ENCODE measurements at regions of chr22 and their contacts with region 1.

Region 1: GRCh38 chr22:36339171-36340065 is 48.3 kb downstream of the MYH9 start:
- DNase-seq: no peak
- H3K4me3 Mint-ChIP-seq: peak overlapping the region; percentile 51
- H3K27ac Mint-ChIP-seq: peak overlapping the region; percentile 91
- H3K4me1 Mint-ChIP-seq: peaks cover 85% of the 10 kb centered on the region
- H3K27me3 Mint-ChIP-seq: no peaks in the 10 kb centered on the region

Region 2: GRCh38 chr22:35930933-35931332 is 408.5 kb before region 1 on chr22:
- intact Hi-C with region 1: no loop called
- DNase-seq: no peak
- H3K4me3 Mint-ChIP-seq: no peak overlapping the region
- H3K27ac Mint-ChIP-seq: no peak overlapping the region
- H3K4me1 Mint-ChIP-seq: no peaks in the 10 kb centered on the region
- H3K27me3 Mint-ChIP-seq: peaks cover 11% of the 10 kb centered on the region

Region 3: GRCh38 chr22:36359181-36359996 is 20.0 kb after region 1 on chr22:
- intact Hi-C with region 1: loop called (anchors 1 kb)
- DNase-seq: no peak
- H3K4me3 Mint-ChIP-seq: peak overlapping the region; percentile 64
- H3K27ac Mint-ChIP-seq: peak overlapping the region; percentile 85
- H3K4me1 Mint-ChIP-seq: peaks cover 78% of the 10 kb centered on the region
- H3K27me3 Mint-ChIP-seq: no peaks in the 10 kb centered on the region

Region 4: DNA sequence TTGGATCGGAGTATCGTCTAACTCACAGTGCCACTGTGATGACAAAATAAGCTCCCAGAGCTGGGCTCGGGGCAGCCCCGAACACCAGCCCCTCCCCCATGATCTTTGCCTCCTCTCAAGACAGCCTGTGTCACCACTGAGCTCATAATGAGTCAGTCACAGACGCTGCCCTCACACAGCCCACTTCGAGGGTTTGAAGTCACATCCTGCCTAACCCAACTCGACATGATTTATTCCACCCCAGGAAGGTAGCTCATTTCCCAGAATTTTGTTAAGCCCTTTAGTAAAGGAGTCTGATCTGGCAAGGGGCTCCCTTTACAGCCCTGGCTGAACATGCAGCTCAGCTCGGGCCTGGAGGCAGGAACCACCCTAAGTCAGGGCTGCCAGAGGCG is 25.6 kb after region 1 on chr22:
- intact Hi-C with region 1: loop called (anchors 1 kb)
- DNase-seq: peak; percentile 80
- H3K4me3 Mint-ChIP-seq: peak overlapping the region; percentile 44
- H3K27ac Mint-ChIP-seq: peak overlapping the region; percentile 93
- H3K4me1 Mint-ChIP-seq: peaks cover 80% of the 10 kb centered on the region
- H3K27me3 Mint-ChIP-seq: no peaks in the 10 kb centered on the region

Region 5: DNA sequence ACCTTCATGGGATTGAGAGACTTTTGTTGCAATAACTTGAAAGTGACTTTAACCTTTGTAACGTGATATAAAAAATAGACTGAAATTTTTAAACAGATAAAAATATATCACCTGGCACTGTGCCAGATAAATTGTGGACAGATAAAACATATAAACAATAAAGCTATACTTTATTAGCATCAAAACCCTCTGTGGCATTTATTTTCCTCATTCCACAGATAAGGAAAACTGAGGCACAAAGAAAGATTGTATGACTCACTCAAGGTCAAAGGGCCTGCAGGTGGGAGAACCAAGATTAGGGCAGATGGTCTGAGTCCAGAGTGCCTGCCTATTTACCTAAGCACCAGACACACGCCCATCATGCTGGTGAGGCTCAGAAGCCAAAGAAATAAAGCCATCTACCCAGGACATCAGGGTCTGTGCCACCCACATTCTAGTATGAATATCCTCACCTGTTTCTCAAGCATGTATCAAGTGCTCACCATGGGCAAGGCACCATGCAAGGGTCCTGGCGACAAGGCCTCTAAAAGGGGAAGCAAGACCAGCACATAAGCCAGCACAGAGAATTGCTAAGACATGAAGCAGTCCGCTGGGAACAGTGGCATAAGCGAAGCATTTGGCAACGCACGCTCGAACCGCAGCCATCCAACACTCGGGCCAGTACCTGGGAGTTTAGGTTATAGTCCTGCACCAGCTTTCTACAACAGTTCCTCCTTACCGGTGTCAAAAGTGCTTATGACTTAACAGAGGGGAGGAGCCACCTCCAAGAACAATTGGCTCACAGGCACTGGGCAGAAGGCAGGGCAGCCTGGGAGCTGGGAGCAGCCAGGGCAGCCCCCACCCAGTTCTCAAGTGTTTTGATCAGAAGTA is 30.7 kb after region 1 on chr22:
- intact Hi-C with region 1: loop called (anchors 1 kb)
- DNase-seq: no peak
- H3K4me3 Mint-ChIP-seq: peak overlapping the region; percentile 77
- H3K27ac Mint-ChIP-seq: peak overlapping the region; percentile 94
- H3K4me1 Mint-ChIP-seq: peaks cover 86% of the 10 kb centered on the region
- H3K27me3 Mint-ChIP-seq: no peaks in the 10 kb centered on the region